ENCODE measurements at regions of chr3 and their contacts with region 1.

Region 1: GRCh38 chr3:123328851-123329635 is 119.8 kb downstream of the ADCY5 start:
- DNase-seq: no peak
- H3K4me3 ChIP-seq: no peak overlapping the region
- H3K27ac ChIP-seq: peak overlapping the region in 3 of 4 donors; percentile 73 to 88 (median 76)
- H3K4me1 ChIP-seq: peaks cover 0 to 35% (median 10%) of the 10 kb centered on the region in 3 donors
- H3K27me3 ChIP-seq: no peaks in the 10 kb centered on the region
- CTCF ChIP-seq: peak; percentile 89 to 95 (median 92)
- POLR2A ChIP-seq: no peak

Region 2: DNA sequence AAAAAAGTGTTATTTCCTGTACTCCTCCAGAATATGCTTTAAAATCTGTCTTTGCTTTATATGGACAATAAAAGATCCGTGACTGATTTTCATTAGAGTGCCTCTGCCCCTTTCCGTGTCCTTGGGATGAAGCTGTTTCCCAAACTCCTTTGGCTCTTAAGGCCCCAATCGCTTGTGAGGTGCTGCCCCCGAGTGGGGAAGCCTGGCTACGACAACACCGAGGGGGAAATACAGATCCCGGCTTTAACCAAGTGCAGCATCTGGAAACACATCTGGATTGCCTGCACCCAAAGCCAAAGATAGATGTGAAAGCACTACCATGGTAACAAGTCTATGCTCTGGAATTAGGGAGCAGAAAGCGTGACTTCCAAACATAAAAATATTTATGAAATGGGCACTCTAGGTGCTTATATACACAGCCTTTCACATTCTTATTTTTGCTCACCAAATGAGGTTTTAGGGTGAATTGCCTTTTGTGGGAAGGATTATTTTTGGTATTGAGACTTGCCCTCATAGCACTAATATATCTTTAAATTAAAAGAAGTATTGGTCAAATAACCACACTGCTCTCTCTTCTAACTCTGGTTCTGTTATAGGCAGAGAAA is 160.5 kb after region 1 on chr3:
- intact Hi-C with region 1: loop called (anchors 2 kb)
- DNase-seq: no peak
- H3K4me3 ChIP-seq: no peak overlapping the region
- H3K27ac ChIP-seq: peak overlapping the region in 3 of 4 donors; percentile 18 to 54 (median 45)
- H3K4me1 ChIP-seq: no peaks in the 10 kb centered on the region
- H3K27me3 ChIP-seq: no peaks in the 10 kb centered on the region
- CTCF ChIP-seq: peak; percentile 31 to 85 (median 76)
- POLR2A ChIP-seq: no peak

Region 3: GRCh38 chr3:123559040-123559861 is 230.2 kb after region 1 on chr3:
- intact Hi-C with region 1: loop called (anchors 10 kb)
- DNase-seq: no peak
- H3K4me3 ChIP-seq: no peak overlapping the region
- H3K27ac ChIP-seq: no peak overlapping the region
- H3K4me1 ChIP-seq: peaks cover 0 to 14% (median 0%) of the 10 kb centered on the region in 3 donors
- H3K27me3 ChIP-seq: no peaks in the 10 kb centered on the region
- CTCF ChIP-seq: peak; percentile 48 to 83 (median 76)
- POLR2A ChIP-seq: no peak